RWPE1 (cell line): ENCODE measurements at regions of chr2 and their contacts with region 1.

Region 1: GRCh38 chr2:28566521-28567041 is 70.7 kb downstream of the PLB1 start:
- DNase-seq: peak; percentile 91
- H3K27ac ChIP-seq: peak overlapping the region; percentile 90
- CTCF ChIP-seq: peak; percentile 99

Region 2: GRCh38 chr2:28233164-28233676 is 333.4 kb before region 1 on chr2:
- CTCF ChIA-PET with region 1: no interaction called
- POLR2A ChIA-PET with region 1: no interaction called
- DNase-seq: no peak
- H3K27ac ChIP-seq: no peak overlapping the region
- CTCF ChIP-seq: no peak

Region 3: GRCh38 chr2:28583899-28584553 is 17.4 kb after region 1 on chr2:
- CTCF ChIA-PET with region 1: interaction called, 17 read pairs
- POLR2A ChIA-PET with region 1: no interaction called
- DNase-seq: peak; percentile 98
- H3K27ac ChIP-seq: peak overlapping the region; percentile 98
- CTCF ChIP-seq: no peak

Region 4: GRCh38 chr2:28594289-28595108 is 27.9 kb after region 1 on chr2:
- CTCF ChIA-PET with region 1: interaction called, 19 read pairs
- POLR2A ChIA-PET with region 1: no interaction called
- DNase-seq: peak; percentile 88
- H3K27ac ChIP-seq: peak overlapping the region; percentile 85
- CTCF ChIP-seq: peak; percentile 83

Region 5: DNA sequence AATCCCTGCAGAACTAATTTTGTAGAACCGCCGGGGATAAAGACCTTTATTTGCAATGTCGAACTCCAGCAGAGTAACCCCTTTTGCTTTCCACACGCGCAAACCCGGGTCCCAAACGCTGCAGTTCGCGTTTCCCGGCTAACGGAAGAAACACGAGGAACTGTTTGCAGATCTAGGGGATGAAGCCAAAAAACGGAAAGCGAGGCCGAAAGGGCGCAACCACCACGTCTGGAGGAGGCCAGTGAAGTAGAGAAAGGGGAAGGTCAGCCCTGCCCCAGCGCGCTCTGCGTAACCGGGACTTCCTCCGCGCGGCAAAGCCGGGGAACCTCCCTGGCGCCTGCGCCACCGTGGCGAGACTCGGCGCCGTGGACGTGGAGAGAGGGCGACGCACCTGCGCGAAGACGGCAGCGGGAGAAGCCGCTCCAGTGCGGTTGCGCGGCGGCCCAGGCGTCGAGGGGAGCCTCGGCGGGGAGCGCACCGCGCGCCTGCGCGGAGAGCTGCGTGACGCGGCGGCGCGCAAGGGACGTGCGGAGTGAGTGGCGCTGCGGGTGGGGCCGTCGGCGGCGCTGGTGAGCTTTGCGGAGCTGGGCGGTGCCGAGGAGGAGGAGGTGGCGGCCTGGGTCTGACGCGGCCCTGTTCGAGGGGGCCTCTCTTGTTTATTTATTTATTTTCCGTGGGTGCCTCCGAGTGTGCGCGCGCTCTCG is 184.8 kb after region 1 on chr2 and contains the start of gene PPP1CB:
- CTCF ChIA-PET with region 1: interaction called, 16 read pairs
- POLR2A ChIA-PET with region 1: no interaction called
- DNase-seq: peak; percentile 89
- H3K27ac ChIP-seq: peak within 1 kb of the TSS; percentile 97
- CTCF ChIP-seq: peak; percentile 17; the same call in 1 of the 2 replicates

Region 6: DNA sequence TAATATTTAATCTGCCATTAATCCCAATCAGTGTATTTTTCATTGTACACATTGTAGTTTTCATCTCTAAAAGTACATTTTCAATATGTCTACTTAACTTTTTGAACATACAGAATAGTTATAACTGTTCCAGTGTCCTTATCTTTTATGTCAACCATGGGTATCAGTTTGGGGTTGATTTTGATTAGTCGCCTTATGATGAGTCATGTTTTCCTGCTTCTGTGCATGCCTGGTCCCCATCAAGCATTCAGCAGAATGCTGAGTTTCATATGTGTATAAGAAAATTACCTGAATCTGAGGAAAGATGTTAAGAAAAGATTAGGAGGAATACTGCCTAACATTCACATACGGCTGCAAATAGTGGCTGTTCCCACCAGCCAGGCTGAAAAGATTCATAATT is 261.8 kb after region 1 on chr2:
- CTCF ChIA-PET with region 1: no interaction called
- POLR2A ChIA-PET with region 1: no interaction called
- DNase-seq: no peak
- H3K27ac ChIP-seq: no peak overlapping the region
- CTCF ChIP-seq: no peak